Esophagus muscularis mucosa (tissue), 4 donors: ENCODE measurements at regions of chr6 and their contacts with region 1.

Region 1: GRCh38 chr6:21679761-21680265 is 86.3 kb downstream of the SOX4 start:
- DNase-seq: no peak
- H3K4me3 ChIP-seq: no peak overlapping the region
- H3K27ac ChIP-seq: peak overlapping the region; percentile 54 to 78 (median 70)
- H3K4me1 ChIP-seq: peaks cover 5 to 16% (median 14%) of the 10 kb centered on the region in 4 donors
- H3K27me3 ChIP-seq: no peaks in the 10 kb centered on the region
- CTCF ChIP-seq: no peak
- EP300 ChIP-seq: no peak
- POLR2A ChIP-seq: no peak

Region 2: DNA sequence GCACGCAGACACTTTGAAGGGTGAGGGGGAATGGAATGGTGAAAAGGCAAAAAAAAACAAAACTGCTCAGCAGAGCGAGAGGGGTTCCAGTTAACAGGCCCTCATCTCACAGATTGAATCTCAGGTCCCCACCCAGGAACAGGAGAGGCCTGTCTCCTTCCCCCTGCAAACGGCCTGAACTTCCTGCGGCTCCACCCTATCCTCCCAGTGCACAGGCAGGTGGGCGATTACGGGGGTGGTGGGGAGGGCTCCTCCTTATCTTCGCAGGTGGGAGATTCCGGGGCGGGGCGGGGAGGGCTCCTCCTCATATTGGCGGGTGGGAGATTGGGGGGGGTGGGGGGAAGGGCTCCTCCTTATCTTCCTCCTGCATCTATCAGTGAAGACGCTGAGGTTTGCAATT is 42.7 kb after region 1 on chr6:
- intact Hi-C with region 1: no loop called
- DNase-seq: no peak
- H3K4me3 ChIP-seq: no peak overlapping the region
- H3K27ac ChIP-seq: no peak overlapping the region
- H3K4me1 ChIP-seq: peaks cover 0 to 11% (median 2%) of the 10 kb centered on the region in 4 donors
- H3K27me3 ChIP-seq: no peaks in the 10 kb centered on the region
- CTCF ChIP-seq: no peak
- EP300 ChIP-seq: no peak
- POLR2A ChIP-seq: no peak

Region 3: GRCh38 chr6:21738184-21739119 is 58.6 kb after region 1 on chr6:
- intact Hi-C with region 1: loop called (anchors 5 kb)
- DNase-seq: peak; percentile 62
- H3K4me3 ChIP-seq: no peak overlapping the region
- H3K27ac ChIP-seq: no peak overlapping the region
- H3K4me1 ChIP-seq: peaks cover 5 to 81% (median 72%) of the 10 kb centered on the region in 4 donors
- H3K27me3 ChIP-seq: no peaks in the 10 kb centered on the region
- CTCF ChIP-seq: no peak
- EP300 ChIP-seq: no peak
- POLR2A ChIP-seq: no peak

Region 4: DNA sequence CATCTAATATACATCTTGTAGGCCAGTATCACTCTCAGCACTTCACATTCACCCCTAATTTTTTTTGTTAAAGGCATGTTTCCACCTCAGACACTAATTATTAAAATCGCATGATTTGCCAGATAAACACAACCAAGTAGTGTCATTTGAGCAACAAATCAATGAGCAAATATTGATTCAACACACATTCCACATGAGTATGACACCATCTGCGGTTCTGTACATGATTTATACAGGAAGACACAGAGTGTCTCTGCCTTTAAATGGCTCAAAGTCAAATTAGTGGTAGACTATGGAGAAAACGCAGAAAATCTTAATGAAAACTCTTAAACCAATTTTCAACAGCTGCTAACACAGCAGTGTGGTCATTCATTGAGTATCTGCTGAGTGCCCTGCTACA is 214.0 kb after region 1 on chr6:
- intact Hi-C with region 1: no loop called
- DNase-seq: no peak
- H3K4me3 ChIP-seq: no peak overlapping the region
- H3K27ac ChIP-seq: no peak overlapping the region
- H3K4me1 ChIP-seq: no peaks in the 10 kb centered on the region
- H3K27me3 ChIP-seq: no peaks in the 10 kb centered on the region
- CTCF ChIP-seq: no peak
- EP300 ChIP-seq: no peak
- POLR2A ChIP-seq: no peak